Activated CD4-positive, alpha-beta memory T cell treated with anti-CD3 and anti-CD28 coated beads for 36 hours (primary cell): ENCODE measurements at regions of chr12 and their contacts with region 1.

Region 1: GRCh38 chr12:57520053-57520871 is at the start of gene DDIT3:
- DNase-seq: peak; percentile 100
- H3K4me3 Mint-ChIP-seq: peak within 1 kb of the TSS; percentile 94
- H3K27ac Mint-ChIP-seq: peak within 1 kb of the TSS; percentile 100
- H3K4me1 Mint-ChIP-seq: peaks cover 55% of the 10 kb centered on the region
- H3K27me3 Mint-ChIP-seq: no peaks in the 10 kb centered on the region
- total RNA-seq, gene DDIT3: 24.1 to 25.2 TPM

Region 2: GRCh38 chr12:57078519-57079404 is 441.5 kb before region 1 on chr12 and contains the start of gene NEMP1:
- CTCF ChIA-PET with region 1: no interaction called
- POLR2A ChIA-PET with region 1: no interaction called
- intact Hi-C with region 1: loop called (anchors 2 kb)
- DNase-seq: peak; percentile 98
- H3K4me3 Mint-ChIP-seq: peak within 1 kb of the TSS; percentile 99
- H3K27ac Mint-ChIP-seq: peak within 1 kb of the TSS; percentile 97
- H3K4me1 Mint-ChIP-seq: peaks cover 36% of the 10 kb centered on the region
- H3K27me3 Mint-ChIP-seq: no peaks in the 10 kb centered on the region
- total RNA-seq, gene NEMP1: 70.6 to 73.5 TPM

Region 3: GRCh38 chr12:57430931-57431720 is 89.1 kb before region 1 on chr12 and contains the start of gene R3HDM2:
- CTCF ChIA-PET with region 1: no interaction called
- POLR2A ChIA-PET with region 1: interaction called, 3 read pairs
- intact Hi-C with region 1: loop called (anchors 1 kb)
- DNase-seq: peak; percentile 97
- H3K4me3 Mint-ChIP-seq: peak within 1 kb of the TSS; percentile 97
- H3K27ac Mint-ChIP-seq: peak within 1 kb of the TSS; percentile 99
- H3K4me1 Mint-ChIP-seq: peaks cover 37% of the 10 kb centered on the region
- H3K27me3 Mint-ChIP-seq: no peaks in the 10 kb centered on the region
- total RNA-seq, gene R3HDM2: 42.2 to 51.4 TPM

Region 4: DNA sequence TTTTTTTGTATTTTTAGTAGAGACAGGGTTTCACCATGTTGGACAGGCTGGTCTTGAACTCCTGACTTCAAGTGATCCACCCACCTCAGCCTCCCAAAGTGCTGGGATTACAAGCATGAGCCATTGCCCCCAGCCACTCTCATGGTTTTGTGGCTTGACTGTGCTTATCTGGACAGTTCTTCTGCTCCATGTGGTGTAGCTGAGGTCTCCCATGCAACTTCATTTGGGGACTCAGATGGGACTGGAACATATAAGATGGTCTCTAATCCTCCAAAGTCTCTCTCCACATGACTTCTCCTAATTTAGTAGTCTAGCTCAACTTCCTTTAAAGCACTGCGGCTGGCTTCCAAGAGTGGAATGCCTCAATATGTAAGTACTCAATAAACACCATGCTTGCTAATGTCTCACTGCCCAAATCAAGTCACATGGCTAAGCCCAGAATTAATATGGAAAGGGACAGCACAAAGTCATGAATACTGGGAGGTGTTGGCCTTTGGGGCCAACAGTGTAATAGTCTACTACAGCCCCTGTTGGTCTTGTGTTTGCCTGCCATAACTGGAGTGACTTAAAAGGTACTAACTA is 78.3 kb before region 1 on chr12:
- CTCF ChIA-PET with region 1: no interaction called
- POLR2A ChIA-PET with region 1: no interaction called
- intact Hi-C with region 1: no loop called
- DNase-seq: no peak
- H3K4me3 Mint-ChIP-seq: no peak overlapping the region
- H3K27ac Mint-ChIP-seq: no peak overlapping the region
- H3K4me1 Mint-ChIP-seq: no peaks in the 10 kb centered on the region
- H3K27me3 Mint-ChIP-seq: peaks cover 6% of the 10 kb centered on the region

Region 5: DNA sequence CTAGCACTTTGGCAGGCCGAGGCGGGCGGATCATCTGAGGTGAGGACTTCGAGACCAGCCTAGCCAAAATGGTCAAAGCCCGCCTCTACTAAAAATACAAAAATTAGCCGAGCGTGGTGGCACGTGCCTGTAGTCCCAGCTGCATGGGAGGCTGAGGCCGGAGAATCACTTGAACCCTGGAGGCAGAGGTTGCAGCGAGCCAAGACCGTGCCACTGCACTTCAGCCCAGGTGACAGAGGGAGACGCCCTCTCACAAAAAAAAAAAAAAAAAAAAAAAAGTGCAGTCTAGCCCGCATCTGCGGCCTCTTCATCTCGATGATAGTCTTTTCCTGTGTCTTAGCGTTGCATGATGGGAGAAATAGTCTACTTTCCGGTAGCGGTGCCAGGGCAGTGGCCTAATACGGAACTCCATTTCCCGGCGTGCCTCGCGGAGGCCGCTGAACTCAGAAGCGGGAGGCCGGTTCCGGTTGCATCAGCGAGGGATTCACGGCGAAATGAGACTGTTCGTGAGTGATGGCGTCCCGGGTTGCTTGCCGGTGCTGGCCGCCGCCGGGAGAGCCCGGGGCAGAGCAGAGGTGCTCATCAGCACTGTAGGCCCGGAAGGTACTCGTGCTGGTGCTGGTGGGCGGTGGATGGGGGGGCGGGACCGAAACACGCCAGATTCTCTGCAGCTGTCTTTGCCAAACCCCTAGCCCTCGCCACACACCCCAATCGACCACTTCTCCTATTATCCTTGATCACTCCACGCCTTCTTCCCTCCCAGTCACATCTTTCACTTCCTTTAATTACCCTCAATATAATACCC is 32.5 kb before region 1 on chr12 and contains the start of gene MARS1:
- CTCF ChIA-PET with region 1: no interaction called
- POLR2A ChIA-PET with region 1: interaction called, 10 read pairs
- intact Hi-C with region 1: loop called (anchors 1 kb)
- DNase-seq: peak; percentile 96
- H3K4me3 Mint-ChIP-seq: peak within 1 kb of the TSS; percentile 97
- H3K27ac Mint-ChIP-seq: peak within 1 kb of the TSS; percentile 94
- H3K4me1 Mint-ChIP-seq: peaks cover 40% of the 10 kb centered on the region
- H3K27me3 Mint-ChIP-seq: no peaks in the 10 kb centered on the region
- total RNA-seq, gene MARS1: 354 to 364 TPM

Region 6: DNA sequence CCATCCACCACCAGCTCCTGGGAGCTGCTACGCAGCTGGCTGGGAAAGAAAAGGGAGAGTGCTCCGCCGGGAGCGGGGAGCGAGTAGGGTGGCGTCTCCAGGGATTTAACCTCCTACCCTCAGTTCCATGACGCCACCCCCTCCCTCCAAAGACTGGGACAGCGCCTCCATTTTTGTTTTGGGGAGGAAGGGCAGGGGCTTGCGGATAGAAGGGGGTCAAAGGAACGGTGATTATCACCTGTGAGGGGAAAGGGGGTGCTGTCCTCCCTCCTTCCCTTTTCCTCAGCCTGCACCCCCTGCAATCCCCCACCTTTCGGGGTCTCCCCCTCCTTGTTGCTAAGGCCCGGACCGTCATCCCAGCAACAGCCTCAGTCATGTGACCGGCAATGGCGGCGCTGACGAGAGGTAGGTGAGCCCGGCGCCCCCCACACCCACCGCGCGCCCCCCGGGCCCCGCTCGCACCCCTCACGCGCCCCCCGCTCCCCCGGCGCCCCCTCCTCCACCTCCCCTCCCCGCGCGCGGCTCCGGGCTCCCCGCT is 84.3 kb after region 1 on chr12 and contains the start of gene DTX3:
- CTCF ChIA-PET with region 1: no interaction called
- POLR2A ChIA-PET with region 1: no interaction called
- intact Hi-C with region 1: no loop called
- DNase-seq: peak; percentile 64
- H3K4me3 Mint-ChIP-seq: peak within 1 kb of the TSS; percentile 74
- H3K27ac Mint-ChIP-seq: peak within 1 kb of the TSS; percentile 68
- H3K4me1 Mint-ChIP-seq: peaks cover 22% of the 10 kb centered on the region
- H3K27me3 Mint-ChIP-seq: no peaks in the 10 kb centered on the region
- total RNA-seq, gene DTX3: 15.4 to 15.8 TPM

Region 7: DNA sequence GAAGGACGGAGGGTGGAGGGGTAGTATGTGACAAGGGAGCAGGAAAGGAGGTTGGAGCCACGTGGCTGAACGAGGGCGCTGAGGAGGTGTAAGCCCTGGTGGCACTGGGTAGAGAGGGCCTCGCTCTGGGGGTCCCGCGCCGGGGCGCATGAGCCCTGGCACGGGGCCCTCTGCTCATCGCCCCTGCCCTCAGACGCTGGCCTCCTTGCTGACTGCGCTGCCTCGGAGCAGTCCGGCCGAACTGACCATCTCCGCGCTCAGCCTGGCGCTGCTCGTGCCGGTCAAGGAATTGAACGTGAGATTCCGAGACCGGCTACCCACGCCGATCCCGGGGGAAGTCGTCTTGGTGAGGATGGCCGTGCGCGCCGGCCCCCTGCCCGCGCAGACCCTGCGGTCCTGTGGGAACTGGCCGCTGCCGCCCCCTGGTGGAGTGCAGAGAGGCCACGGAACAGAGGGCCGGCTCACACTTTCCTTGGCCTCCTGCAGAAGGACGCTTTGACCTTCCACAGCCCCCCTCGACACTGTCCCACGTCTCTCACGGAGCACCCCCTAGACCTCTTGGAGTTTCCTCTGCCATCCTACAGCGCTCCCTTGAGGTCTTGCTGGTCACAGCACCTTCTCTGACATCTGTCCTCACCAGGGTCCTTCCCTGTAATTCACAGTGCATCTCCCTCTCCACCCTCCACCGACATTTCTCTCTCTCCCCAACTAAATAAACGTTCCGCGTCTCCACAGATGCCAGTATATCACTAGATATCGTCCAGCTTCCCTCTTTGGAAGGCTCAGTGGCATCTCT is 101.4 kb after region 1 on chr12:
- CTCF ChIA-PET with region 1: interaction called, 4 read pairs
- POLR2A ChIA-PET with region 1: no interaction called
- intact Hi-C with region 1: loop called (anchors 5 kb)
- DNase-seq: peak; percentile 68
- H3K4me3 Mint-ChIP-seq: peak overlapping the region; percentile 63
- H3K27ac Mint-ChIP-seq: no peak overlapping the region
- H3K4me1 Mint-ChIP-seq: peaks cover 24% of the 10 kb centered on the region
- H3K27me3 Mint-ChIP-seq: peaks cover 88% of the 10 kb centered on the region

Region 8: DNA sequence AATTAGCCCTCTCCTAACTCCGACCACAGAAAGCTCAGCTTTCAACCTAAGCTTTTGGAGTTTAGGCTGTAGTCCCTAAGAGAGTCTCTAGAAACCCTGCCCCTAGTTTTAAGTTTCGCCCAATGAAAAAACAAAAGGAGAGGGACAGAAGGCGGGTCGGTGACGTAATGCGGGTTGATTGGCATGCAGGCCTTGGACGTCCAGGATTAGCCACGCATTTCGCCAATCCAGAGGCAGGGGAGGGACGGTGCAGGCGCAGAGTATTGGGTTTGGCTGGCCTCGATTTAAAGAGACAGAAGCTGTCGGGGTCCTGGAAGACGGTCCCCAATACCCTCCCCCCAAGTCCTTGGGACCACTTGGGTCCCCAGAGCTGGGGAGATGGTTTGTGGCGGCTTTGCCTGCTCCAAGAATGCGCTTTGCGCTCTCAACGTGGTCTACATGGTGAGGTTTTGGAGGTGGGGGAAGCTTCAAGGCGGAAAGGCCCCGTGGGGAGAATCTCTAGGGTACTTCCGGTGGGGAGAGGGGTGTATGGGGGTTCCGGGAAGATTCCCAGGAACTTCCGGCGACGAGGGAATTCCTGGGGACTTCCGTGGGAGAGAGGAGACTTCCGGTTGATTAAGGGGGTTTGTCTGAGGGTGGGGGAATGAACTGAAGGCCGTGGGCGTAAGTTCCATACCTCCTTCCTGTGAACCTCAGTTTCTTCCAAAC is 224.7 kb after region 1 on chr12 and contains the start of gene TSPAN31:
- CTCF ChIA-PET with region 1: no interaction called
- POLR2A ChIA-PET with region 1: interaction called, 4 read pairs
- intact Hi-C with region 1: loop called (anchors 2 kb)
- DNase-seq: peak; percentile 98
- H3K4me3 Mint-ChIP-seq: peak within 1 kb of the TSS; percentile 93
- H3K27ac Mint-ChIP-seq: peak within 1 kb of the TSS; percentile 88
- H3K4me1 Mint-ChIP-seq: peaks cover 50% of the 10 kb centered on the region
- H3K27me3 Mint-ChIP-seq: no peaks in the 10 kb centered on the region
- total RNA-seq, gene TSPAN31: 11.7 to 15.0 TPM